ENCODE measurements at regions of chr13 and their contacts with region 1.

Region 1: DNA sequence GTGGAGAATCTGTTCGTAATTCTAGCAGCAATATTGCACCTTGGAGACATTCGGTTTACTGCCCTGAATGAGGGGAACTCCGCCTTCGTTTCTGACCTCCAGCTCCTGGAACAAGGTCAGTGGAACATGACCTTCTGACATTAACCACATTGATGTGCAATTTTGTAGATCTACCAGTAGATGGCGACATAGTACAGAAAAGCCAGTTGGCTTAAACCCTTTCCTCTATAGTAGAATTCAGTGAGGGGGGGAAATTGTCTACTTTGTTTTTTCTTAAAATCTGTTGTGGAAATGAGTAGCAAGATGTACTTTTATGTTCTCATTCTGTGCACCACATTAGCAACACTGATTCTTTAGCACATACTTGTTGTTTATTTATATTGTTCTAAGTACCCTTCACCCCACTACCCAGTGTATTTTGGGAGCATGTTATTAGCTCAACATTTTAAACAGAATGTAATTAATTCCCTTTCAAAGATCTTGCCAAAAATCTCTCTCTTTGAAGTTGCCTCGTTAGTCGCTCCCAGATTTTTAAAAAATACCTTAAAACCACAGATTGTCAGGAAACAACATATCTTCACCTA is 332.2 kb downstream of the MYO16 start:
- DNase-seq: peak; percentile 50
- H3K4me3 ChIP-seq: no peak overlapping the region
- H3K27ac ChIP-seq: peak overlapping the region; percentile 18
- H3K4me1 ChIP-seq: peaks cover 39% of the 10 kb centered on the region
- H3K27me3 ChIP-seq: no peaks in the 10 kb centered on the region
- CTCF ChIP-seq: peak; percentile 77 to 79

Region 2: DNA sequence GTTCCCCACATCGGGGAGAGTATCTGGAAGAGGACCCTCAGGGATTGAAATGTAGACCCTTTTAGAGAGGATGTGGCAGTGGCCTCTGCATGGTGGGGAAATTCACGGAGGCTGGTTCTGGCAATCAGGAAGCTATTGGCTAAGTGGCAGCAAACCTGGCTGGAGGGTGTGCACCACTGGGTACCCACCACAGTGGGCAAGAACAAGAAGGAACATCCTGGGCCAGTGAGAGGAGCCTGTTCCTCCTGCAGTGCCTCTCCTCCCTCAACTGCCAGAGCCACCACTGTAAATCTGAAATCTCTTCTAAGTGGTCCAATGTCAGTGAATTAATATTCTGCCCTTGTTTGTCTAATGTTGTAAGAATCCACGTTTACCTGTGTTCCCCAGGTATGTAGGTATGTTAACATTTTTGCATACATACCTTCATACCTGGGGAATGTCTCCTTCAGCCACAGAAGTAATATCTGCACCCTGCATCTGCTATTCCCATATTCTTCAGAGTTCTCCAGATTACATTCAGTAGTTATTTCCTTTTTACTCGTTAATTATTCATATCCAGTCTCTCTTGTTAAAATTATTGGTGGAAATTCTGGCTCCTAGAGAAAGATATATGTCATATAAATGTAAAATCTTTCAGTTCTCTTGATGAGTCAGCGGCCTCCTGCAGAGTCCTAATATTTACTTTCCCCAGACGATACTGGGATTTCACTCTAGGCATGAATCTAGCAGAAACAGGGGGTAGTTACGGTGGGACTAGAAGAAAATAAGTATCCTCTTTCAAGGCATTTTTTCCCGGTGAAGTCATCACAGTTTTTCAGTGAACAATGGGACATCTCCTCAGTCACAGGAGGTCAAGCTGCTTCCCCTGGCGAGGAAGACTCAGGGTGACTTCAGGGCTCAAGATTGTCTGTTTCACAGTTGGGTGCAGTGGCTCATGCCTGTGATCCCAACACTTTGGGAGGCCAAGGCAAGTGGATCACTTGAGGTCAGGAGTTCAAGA is 183.9 kb before region 1 on chr13:
- CTCF ChIA-PET with region 1: no interaction called
- dilution Hi-C with region 1: no loop called
- in situ Hi-C with region 1: no loop called
- intact Hi-C with region 1: no loop called
- DNase-seq: no peak
- H3K4me3 ChIP-seq: no peak overlapping the region
- H3K27ac ChIP-seq: no peak overlapping the region
- H3K4me1 ChIP-seq: no peaks in the 10 kb centered on the region
- H3K27me3 ChIP-seq: no peaks in the 10 kb centered on the region
- CTCF ChIP-seq: no peak

Region 3: GRCh38 chr13:109131698-109132257 is 170.1 kb after region 1 on chr13:
- CTCF ChIA-PET with region 1: interaction called, 16 read pairs
- dilution Hi-C with region 1: no loop called
- in situ Hi-C with region 1: no loop called
- intact Hi-C with region 1: no loop called
- DNase-seq: no peak
- H3K4me3 ChIP-seq: no peak overlapping the region
- H3K27ac ChIP-seq: no peak overlapping the region
- H3K4me1 ChIP-seq: no peaks in the 10 kb centered on the region
- H3K27me3 ChIP-seq: no peaks in the 10 kb centered on the region
- CTCF ChIP-seq: no peak

Region 4: DNA sequence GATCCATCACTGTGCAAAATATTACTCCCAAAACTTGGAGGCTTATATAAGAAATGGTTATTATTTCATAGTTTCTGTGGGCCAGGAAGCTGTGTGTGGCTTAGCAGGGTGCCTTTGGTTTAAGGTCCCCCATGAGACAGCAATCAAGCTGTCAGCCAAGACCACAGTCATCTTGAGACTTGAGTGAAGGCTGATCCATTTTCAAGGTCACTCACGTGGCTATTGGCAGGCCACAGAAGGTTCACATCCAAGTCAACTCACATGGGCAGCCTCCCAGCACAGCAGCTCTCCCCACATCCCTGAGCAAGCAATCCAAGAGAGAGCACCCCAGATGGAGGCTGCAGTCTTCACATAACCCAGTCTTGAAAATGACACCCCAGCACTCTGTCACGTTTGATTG is 205.2 kb after region 1 on chr13:
- CTCF ChIA-PET with region 1: no interaction called
- dilution Hi-C with region 1: no loop called
- in situ Hi-C with region 1: no loop called
- intact Hi-C with region 1: no loop called
- DNase-seq: no peak
- H3K4me3 ChIP-seq: no peak overlapping the region
- H3K27ac ChIP-seq: no peak overlapping the region
- H3K4me1 ChIP-seq: no peaks in the 10 kb centered on the region
- H3K27me3 ChIP-seq: no peaks in the 10 kb centered on the region
- CTCF ChIP-seq: no peak

Region 5: GRCh38 chr13:109256866-109257760 is 295.5 kb after region 1 on chr13:
- CTCF ChIA-PET with region 1: no interaction called
- dilution Hi-C with region 1: no loop called
- in situ Hi-C with region 1: loop called (anchors 25 kb)
- intact Hi-C with region 1: loop called (anchors 5 kb)
- DNase-seq: peak; percentile 100
- H3K4me3 ChIP-seq: no peak overlapping the region
- H3K27ac ChIP-seq: peak overlapping the region; percentile 99
- H3K4me1 ChIP-seq: peaks cover 57% of the 10 kb centered on the region
- H3K27me3 ChIP-seq: no peaks in the 10 kb centered on the region
- CTCF ChIP-seq: no peak

Region 6: GRCh38 chr13:109610517-109610916 is 648.9 kb after region 1 on chr13:
- CTCF ChIA-PET with region 1: no interaction called
- dilution Hi-C with region 1: no loop called
- in situ Hi-C with region 1: no loop called
- intact Hi-C with region 1: loop called (anchors 5 kb)
- DNase-seq: no peak
- H3K4me3 ChIP-seq: no peak overlapping the region
- H3K27ac ChIP-seq: no peak overlapping the region
- H3K4me1 ChIP-seq: no peaks in the 10 kb centered on the region
- H3K27me3 ChIP-seq: no peaks in the 10 kb centered on the region
- CTCF ChIP-seq: peak; percentile 22 to 51

Region 7: DNA sequence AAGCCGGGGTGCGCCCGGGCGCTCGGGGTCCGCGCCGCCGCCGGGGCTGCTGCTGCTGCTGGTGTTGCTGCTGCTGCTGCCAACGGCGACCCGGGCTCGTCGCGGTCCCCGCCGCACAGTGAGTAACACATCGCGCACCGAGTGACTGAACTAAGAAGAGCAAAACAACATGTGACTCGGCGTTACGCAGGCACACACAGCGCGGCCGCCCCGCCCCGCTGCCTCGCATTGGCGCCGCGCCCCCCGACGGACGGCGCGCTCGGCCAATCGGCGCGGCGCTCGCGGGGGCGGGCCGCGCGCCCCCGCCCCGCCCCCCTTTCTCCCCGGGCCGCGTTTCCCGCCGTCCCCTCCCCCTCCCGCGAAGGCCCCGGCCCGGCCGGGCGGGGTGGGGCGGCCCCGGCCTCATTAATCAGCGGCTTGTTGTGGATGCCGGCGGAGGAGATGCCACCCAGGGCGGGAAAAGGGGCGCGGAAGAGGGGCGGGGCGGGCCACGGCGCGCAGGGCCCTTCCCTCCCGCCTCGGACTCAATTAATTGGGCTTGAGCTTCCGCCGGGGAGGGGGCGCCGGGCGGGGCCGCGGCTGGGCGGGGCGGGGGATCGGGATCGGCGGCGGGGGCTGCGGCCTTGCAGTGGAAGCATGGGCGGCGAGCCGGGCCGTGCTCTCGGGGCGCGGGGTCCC is 825.0 kb after region 1 on chr13 and contains the start of gene IRS2:
- CTCF ChIA-PET with region 1: no interaction called
- dilution Hi-C with region 1: no loop called
- in situ Hi-C with region 1: no loop called
- intact Hi-C with region 1: loop called (anchors 1 kb)
- DNase-seq: peak; percentile 90
- H3K4me3 ChIP-seq: peak within 1 kb of the TSS; percentile 81
- H3K27ac ChIP-seq: peak within 1 kb of the TSS; percentile 78
- H3K4me1 ChIP-seq: peaks cover 41% of the 10 kb centered on the region
- H3K27me3 ChIP-seq: no peaks in the 10 kb centered on the region
- CTCF ChIP-seq: no peak
- total RNA-seq, gene IRS2: 22.7 to 37.8 TPM

Region 8: DNA sequence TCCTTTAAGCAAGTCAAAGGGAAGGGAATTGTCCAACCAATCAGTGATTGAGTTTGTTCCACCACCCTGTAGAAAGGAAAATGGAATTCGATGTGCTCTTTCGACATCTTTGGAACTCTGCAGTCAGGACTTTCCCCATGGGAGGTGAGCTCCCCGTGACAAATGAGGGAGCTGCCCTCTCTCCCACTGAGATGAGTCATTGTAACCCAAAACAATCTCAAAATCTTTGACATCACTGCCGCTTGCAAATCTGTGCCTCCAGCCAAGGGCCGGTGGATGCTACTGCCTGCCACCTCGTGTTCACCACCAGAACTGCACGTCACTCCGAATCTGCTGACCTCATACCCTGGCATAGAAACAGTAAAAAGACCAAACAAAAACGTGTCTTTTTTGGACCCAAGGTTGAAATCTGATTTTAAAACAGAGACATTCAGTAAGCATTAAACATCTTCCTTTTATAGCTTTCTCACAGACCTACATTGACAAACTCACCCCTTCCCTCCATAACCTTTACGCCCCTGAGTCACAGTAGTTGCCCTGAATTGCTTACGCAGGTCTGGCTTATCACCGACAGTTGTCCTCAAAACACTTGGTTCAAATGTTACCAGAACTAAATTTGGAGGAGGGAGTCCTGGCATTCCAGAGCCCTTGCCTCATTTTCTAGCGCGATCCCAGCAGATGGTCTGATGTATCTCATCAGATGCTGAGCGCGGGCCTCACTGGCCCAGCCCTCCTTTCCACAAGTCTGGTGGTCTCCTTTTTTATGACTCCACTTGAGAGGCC is 1450.7 kb after region 1 on chr13:
- CTCF ChIA-PET with region 1: interaction called, 7 read pairs
- dilution Hi-C with region 1: no loop called
- in situ Hi-C with region 1: loop called in 1 of 2 experiments (anchors 25 kb)
- intact Hi-C with region 1: no loop called
- DNase-seq: peak; percentile 97
- H3K4me3 ChIP-seq: no peak overlapping the region
- H3K27ac ChIP-seq: peak overlapping the region; percentile 35
- H3K4me1 ChIP-seq: peaks cover 40% of the 10 kb centered on the region
- H3K27me3 ChIP-seq: no peaks in the 10 kb centered on the region
- CTCF ChIP-seq: peak; percentile 90 to 92

Measured in mammary epithelial cell (primary cell).